HEK293T (cell line): ENCODE measurements at regions of chr9 and their contacts with region 1.

Region 1: DNA sequence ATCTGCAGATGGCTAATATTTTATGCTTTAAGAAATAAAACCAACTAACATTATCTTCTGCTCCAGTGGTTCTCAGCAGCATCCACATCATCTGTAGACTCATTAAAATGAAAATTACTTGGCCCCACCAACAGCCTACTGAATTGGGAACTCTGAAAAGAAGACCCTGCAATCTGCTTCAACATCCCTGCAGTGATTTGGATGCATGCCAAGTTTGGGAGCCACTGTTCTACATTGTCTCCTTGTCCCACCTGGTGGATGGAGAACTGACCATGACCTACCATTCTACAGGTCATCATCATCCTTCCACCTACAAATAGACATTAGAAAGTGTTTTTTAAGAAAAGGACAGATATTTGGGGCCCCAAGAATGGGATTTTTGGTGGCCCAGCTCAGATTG is 71.1 kb downstream of the ACER2 start:
- DNase-seq: no peak

Region 2: GRCh38 chr9:19464764-19465585 is 14.9 kb before region 1 on chr9:
- CTCF ChIA-PET with region 1: interaction called, 12 read pairs
- POLR2A ChIA-PET with region 1: no interaction called
- DNase-seq: peak; percentile 93